Activated B cell treated with CpG ODN at 0.5 μM for 24 hours (primary cell): ENCODE measurements at regions of chr19 and their contacts with region 1.

Region 1: GRCh38 chr19:49017666-49018351 is 918 bp upstream of the LHB start:
- DNase-seq: peak; percentile 70
- ATAC-seq: peak; percentile 77
- H3K4me3 Mint-ChIP-seq: peak overlapping the region; percentile 87
- H3K27ac Mint-ChIP-seq: no peak overlapping the region
- H3K4me1 Mint-ChIP-seq: peaks cover 32% of the 10 kb centered on the region
- H3K27me3 Mint-ChIP-seq: peaks cover 3% of the 10 kb centered on the region
- CTCF ChIP-seq: no peak

Region 2: DNA sequence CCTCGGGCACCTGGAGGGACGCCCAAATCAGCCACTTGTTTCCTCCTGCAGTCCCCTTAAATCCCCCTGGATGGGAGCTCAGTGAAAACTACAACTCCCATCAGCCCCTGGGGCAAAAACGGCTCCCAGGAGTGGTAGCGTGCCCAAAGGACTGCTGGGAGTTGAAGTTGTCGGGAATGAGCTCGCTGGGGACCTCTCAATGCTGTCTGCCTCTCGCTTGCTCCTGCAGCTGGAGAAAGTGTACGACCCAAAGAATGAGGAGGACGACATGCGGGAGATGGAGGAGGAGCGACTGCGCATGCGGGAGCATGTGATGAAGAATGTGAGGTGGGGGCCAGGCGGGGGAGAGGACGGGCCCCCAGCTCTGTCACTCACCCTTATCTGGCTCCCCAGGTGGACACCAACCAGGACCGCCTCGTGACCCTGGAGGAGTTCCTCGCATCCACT is 99.0 kb before region 1 on chr19:
- CTCF ChIA-PET with region 1: no interaction called
- POLR2A ChIA-PET with region 1: no interaction called
- intact Hi-C with region 1: no loop called
- DNase-seq: no peak
- ATAC-seq: peak; percentile 25
- H3K4me3 Mint-ChIP-seq: no peak overlapping the region
- H3K27ac Mint-ChIP-seq: no peak overlapping the region
- H3K4me1 Mint-ChIP-seq: peaks cover 11% of the 10 kb centered on the region
- H3K27me3 Mint-ChIP-seq: no peaks in the 10 kb centered on the region
- CTCF ChIP-seq: no peak

Region 3: GRCh38 chr19:49056010-49056901 is 38.4 kb after region 1 on chr19:
- CTCF ChIA-PET with region 1: no interaction called
- POLR2A ChIA-PET with region 1: no interaction called
- intact Hi-C with region 1: loop called (anchors 5 kb)
- DNase-seq: peak; percentile 72
- ATAC-seq: peak; percentile 83
- H3K4me3 Mint-ChIP-seq: peak overlapping the region; percentile 79
- H3K27ac Mint-ChIP-seq: no peak overlapping the region
- H3K4me1 Mint-ChIP-seq: peaks cover 24% of the 10 kb centered on the region
- H3K27me3 Mint-ChIP-seq: peaks cover 33% of the 10 kb centered on the region
- CTCF ChIP-seq: no peak